MCF 10A (cell line): ENCODE measurements at regions of chr5 and their contacts with region 1.

Region 1: GRCh38 chr5:137320056-137321045 is 178.8 kb downstream of the SPOCK1 start:
- DNase-seq: peak; percentile 78
- H3K4me3 Mint-ChIP-seq: no peak overlapping the region
- H3K27ac Mint-ChIP-seq: peak overlapping the region; percentile 32
- H3K4me1 Mint-ChIP-seq: peaks cover 11% of the 10 kb centered on the region
- H3K27me3 Mint-ChIP-seq: no peaks in the 10 kb centered on the region
- CTCF ChIP-seq: peak; percentile 93

Region 2: GRCh38 chr5:136979131-136979530 is 341.2 kb before region 1 on chr5:
- CTCF ChIA-PET with region 1: no interaction called
- POLR2A ChIA-PET with region 1: no interaction called
- intact Hi-C with region 1: no loop called
- DNase-seq: no peak
- H3K4me3 Mint-ChIP-seq: no peak overlapping the region
- H3K27ac Mint-ChIP-seq: no peak overlapping the region
- H3K4me1 Mint-ChIP-seq: no peaks in the 10 kb centered on the region
- H3K27me3 Mint-ChIP-seq: no peaks in the 10 kb centered on the region
- CTCF ChIP-seq: no peak

Region 3: GRCh38 chr5:137234973-137235943 is 85.1 kb before region 1 on chr5:
- CTCF ChIA-PET with region 1: interaction called, 20 read pairs
- POLR2A ChIA-PET with region 1: no interaction called
- intact Hi-C with region 1: no loop called
- DNase-seq: peak; percentile 68
- H3K4me3 Mint-ChIP-seq: no peak overlapping the region
- H3K27ac Mint-ChIP-seq: peak overlapping the region; percentile 53
- H3K4me1 Mint-ChIP-seq: peaks cover 26% of the 10 kb centered on the region
- H3K27me3 Mint-ChIP-seq: no peaks in the 10 kb centered on the region
- CTCF ChIP-seq: no peak

Region 4: GRCh38 chr5:137336565-137337120 is 16.3 kb after region 1 on chr5:
- CTCF ChIA-PET with region 1: interaction called, 105 read pairs
- POLR2A ChIA-PET with region 1: no interaction called
- intact Hi-C with region 1: no loop called
- DNase-seq: no peak
- H3K4me3 Mint-ChIP-seq: no peak overlapping the region
- H3K27ac Mint-ChIP-seq: no peak overlapping the region
- H3K4me1 Mint-ChIP-seq: no peaks in the 10 kb centered on the region
- H3K27me3 Mint-ChIP-seq: no peaks in the 10 kb centered on the region
- CTCF ChIP-seq: no peak

Region 5: DNA sequence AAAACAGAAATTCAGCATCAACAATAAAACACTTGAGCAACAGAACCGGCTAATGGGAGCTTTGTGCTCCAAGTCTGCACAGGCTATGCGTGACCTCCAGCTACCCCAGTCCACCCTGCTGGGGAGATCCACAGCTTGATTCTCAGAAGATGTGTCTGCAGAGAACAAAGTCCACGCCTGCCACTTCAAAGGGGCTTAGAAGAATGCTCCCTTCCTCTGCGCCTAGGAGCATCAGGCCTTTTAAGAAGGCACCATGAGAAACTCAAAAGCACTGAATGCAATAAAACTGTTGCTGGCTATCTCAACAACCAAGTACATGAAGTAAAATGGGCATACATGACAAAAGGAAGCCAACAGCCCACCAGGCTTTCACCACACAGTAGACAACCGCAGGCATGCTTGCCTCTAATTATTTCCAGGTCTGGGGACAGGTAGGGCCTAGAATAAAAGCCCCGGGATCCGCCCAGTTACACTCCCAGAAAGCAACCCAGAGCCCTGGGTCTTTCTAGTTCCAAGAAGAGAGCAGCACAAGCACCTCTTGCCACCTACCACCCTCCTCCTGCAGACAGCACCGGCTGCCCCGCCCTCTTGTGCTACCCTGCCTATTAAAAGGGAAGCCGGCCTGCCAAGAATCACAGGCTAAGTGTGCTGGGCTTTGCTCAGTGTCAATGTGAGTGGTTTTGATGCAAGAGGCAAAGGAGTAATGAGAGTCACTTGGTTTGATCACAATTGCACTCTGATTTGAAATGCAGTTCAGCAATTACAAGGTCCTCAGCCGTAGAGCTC is 55.6 kb after region 1 on chr5:
- CTCF ChIA-PET with region 1: interaction called, 19 read pairs
- POLR2A ChIA-PET with region 1: interaction called, 3 read pairs
- intact Hi-C with region 1: no loop called
- DNase-seq: no peak
- H3K4me3 Mint-ChIP-seq: no peak overlapping the region
- H3K27ac Mint-ChIP-seq: no peak overlapping the region
- H3K4me1 Mint-ChIP-seq: no peaks in the 10 kb centered on the region
- H3K27me3 Mint-ChIP-seq: no peaks in the 10 kb centered on the region
- CTCF ChIP-seq: no peak

Region 6: DNA sequence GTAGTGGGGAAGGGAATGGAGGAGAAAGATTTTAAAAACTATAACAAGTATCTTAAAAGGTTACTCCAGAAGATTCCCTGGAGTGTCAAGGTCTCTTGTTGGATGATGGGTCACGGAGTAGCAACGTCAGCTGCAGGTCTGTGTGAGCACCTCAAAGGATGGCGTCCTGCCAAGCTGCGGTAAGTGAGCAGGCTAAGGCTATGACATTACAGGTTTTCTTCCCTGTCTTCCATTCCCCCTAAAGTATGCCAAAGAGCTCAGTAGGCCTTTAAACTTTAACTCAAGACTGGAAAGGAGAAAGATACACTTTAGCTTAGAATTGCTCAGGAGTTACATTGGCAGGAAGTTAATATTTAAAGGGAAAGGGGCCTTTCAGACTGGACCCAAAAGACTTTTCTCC is 161.2 kb after region 1 on chr5:
- CTCF ChIA-PET with region 1: interaction called, 10 read pairs
- POLR2A ChIA-PET with region 1: interaction called, 4 read pairs
- intact Hi-C with region 1: no loop called
- DNase-seq: peak; percentile 43
- H3K4me3 Mint-ChIP-seq: no peak overlapping the region
- H3K27ac Mint-ChIP-seq: no peak overlapping the region
- H3K4me1 Mint-ChIP-seq: peaks cover 5% of the 10 kb centered on the region
- H3K27me3 Mint-ChIP-seq: no peaks in the 10 kb centered on the region
- CTCF ChIP-seq: no peak

Region 7: GRCh38 chr5:137619191-137619870 is 299.0 kb after region 1 on chr5:
- CTCF ChIA-PET with region 1: interaction called, 16 read pairs
- POLR2A ChIA-PET with region 1: no interaction called
- intact Hi-C with region 1: loop called (anchors 5 kb)
- DNase-seq: peak; percentile 79
- H3K4me3 Mint-ChIP-seq: no peak overlapping the region
- H3K27ac Mint-ChIP-seq: peak overlapping the region; percentile 46
- H3K4me1 Mint-ChIP-seq: peaks cover 41% of the 10 kb centered on the region
- H3K27me3 Mint-ChIP-seq: no peaks in the 10 kb centered on the region
- CTCF ChIP-seq: no peak